CD4-positive, alpha-beta T cell (primary cell): ENCODE measurements at regions of chr18 and their contacts with region 1.

Region 1: GRCh38 chr18:59070181-59070912 is 69.3 kb upstream of the SEC11C start:
- DNase-seq: peak; percentile 64 to 82 (median 74)
- ATAC-seq: peak; percentile 76
- H3K4me3 ChIP-seq: no peak overlapping the region
- H3K4me3 Mint-ChIP-seq: no peak overlapping the region
- H3K27ac ChIP-seq: no peak overlapping the region
- H3K27ac Mint-ChIP-seq: no peak overlapping the region
- H3K4me1 ChIP-seq: peaks cover 3% of the 10 kb centered on the region
- H3K4me1 Mint-ChIP-seq: no peaks in the 10 kb centered on the region
- H3K27me3 ChIP-seq: peaks cover 0 to 4% of the 10 kb centered on the region in 2 experiments
- H3K27me3 Mint-ChIP-seq: no peaks in the 10 kb centered on the region
- CTCF ChIP-seq: peak; percentile 84

Region 2: GRCh38 chr18:57910817-57911216 is 1159.5 kb before region 1 on chr18:
- CTCF ChIA-PET with region 1: no interaction called
- POLR2A ChIA-PET with region 1: no interaction called
- intact Hi-C with region 1: no loop called
- DNase-seq: no peak
- ATAC-seq: no peak
- H3K4me3 ChIP-seq: no peak overlapping the region
- H3K4me3 Mint-ChIP-seq: no peak overlapping the region
- H3K27ac ChIP-seq: no peak overlapping the region
- H3K27ac Mint-ChIP-seq: no peak overlapping the region
- H3K4me1 ChIP-seq: no peaks in the 10 kb centered on the region
- H3K4me1 Mint-ChIP-seq: peaks cover 2% of the 10 kb centered on the region
- H3K27me3 ChIP-seq: no peaks in the 10 kb centered on the region
- H3K27me3 Mint-ChIP-seq: peaks cover 13% of the 10 kb centered on the region
- CTCF ChIP-seq: no peak

Region 3: GRCh38 chr18:58303363-58303762 is 767.0 kb before region 1 on chr18:
- CTCF ChIA-PET with region 1: no interaction called
- POLR2A ChIA-PET with region 1: no interaction called
- intact Hi-C with region 1: loop called in 1 of 2 experiments (anchors 5 kb)
- DNase-seq: peak in 5 of 14 experiments; percentile 16 to 71 (median 52)
- ATAC-seq: peak; percentile 89
- H3K4me3 ChIP-seq: no peak overlapping the region
- H3K4me3 Mint-ChIP-seq: peak overlapping the region; percentile 37
- H3K27ac ChIP-seq: peak overlapping the region in 1 of 2 donors; percentile 18
- H3K27ac Mint-ChIP-seq: peak overlapping the region; percentile 64
- H3K4me1 ChIP-seq: peaks cover 18% of the 10 kb centered on the region
- H3K4me1 Mint-ChIP-seq: peaks cover 30% of the 10 kb centered on the region
- H3K27me3 ChIP-seq: no peaks in the 10 kb centered on the region
- H3K27me3 Mint-ChIP-seq: no peaks in the 10 kb centered on the region
- CTCF ChIP-seq: no peak

Region 4: DNA sequence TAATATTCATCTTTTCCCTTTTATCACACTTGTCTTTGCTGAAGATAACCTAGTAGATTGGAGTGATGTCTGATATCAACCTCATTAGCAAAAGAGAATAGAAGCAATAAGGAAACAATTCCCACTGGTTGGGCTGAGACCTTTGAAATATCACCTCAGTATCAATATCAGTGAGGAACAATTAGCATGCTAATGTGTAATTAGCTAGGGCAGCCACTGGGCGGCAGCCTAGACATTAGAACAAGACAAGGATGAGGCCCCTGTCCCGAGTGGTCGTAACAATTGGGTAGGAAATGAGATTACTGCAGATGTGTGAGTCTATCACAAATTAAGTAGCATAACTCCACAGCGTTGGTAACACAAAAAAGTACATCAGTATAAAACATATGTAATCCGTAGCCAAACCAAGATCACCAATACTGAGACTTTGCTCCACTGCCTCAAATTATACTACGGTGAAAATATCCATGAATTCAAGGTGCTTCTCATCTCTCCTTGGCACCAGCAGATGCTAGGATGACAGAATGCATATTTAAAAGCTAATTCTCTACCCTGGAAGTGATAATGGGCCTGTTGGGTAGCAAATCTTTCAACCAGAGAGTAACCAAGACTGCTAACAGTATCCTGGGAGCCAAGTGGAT is 540.5 kb before region 1 on chr18:
- CTCF ChIA-PET with region 1: no interaction called
- POLR2A ChIA-PET with region 1: no interaction called
- intact Hi-C with region 1: loop called (anchors 5 to 10 kb)
- DNase-seq: peak; percentile 48 to 78 (median 66)
- ATAC-seq: peak; percentile 88
- H3K4me3 ChIP-seq: no peak overlapping the region
- H3K4me3 Mint-ChIP-seq: no peak overlapping the region
- H3K27ac ChIP-seq: no peak overlapping the region
- H3K27ac Mint-ChIP-seq: no peak overlapping the region
- H3K4me1 ChIP-seq: peaks cover 4% of the 10 kb centered on the region
- H3K4me1 Mint-ChIP-seq: peaks cover 5% of the 10 kb centered on the region
- H3K27me3 ChIP-seq: no peaks in the 10 kb centered on the region
- H3K27me3 Mint-ChIP-seq: no peaks in the 10 kb centered on the region
- CTCF ChIP-seq: peak; percentile 96

Region 5: DNA sequence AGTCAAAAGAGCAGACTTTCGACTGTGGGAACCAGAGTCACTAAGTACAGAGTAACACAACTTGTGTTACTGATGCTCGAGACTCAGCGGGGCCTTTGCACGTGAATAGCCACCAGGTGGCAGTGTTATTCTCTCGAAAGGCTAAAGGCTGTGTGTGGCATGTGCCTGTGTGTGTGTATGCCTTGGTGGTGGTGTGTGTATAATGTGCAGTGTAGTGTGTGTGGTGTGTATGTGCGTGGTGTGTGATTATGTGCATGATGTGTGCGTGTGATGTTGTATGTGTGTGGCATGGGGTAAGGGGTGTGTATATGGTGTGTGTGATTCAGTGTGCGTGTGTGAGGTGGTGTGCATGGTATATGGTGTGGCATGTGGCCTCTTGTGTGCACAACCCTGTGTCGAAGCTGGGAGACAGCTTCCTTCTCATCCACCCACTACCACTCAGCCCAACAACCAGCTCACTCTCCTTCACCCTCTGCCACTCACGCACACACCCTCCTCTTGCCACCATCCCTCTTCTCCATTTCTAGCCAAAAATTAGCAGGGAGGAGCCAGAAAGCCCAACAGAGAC is 288.6 kb before region 1 on chr18:
- CTCF ChIA-PET with region 1: interaction called, 8 read pairs
- POLR2A ChIA-PET with region 1: no interaction called
- intact Hi-C with region 1: loop called (anchors 1 kb)
- DNase-seq: peak; percentile 45 to 81 (median 56)
- ATAC-seq: peak; percentile 78
- H3K4me3 ChIP-seq: no peak overlapping the region
- H3K4me3 Mint-ChIP-seq: no peak overlapping the region
- H3K27ac ChIP-seq: no peak overlapping the region
- H3K27ac Mint-ChIP-seq: no peak overlapping the region
- H3K4me1 ChIP-seq: no peaks in the 10 kb centered on the region
- H3K4me1 Mint-ChIP-seq: no peaks in the 10 kb centered on the region
- H3K27me3 ChIP-seq: peaks cover 9 to 12% of the 10 kb centered on the region in 2 experiments
- H3K27me3 Mint-ChIP-seq: peaks cover 45% of the 10 kb centered on the region
- CTCF ChIP-seq: peak; percentile 90

Region 6: DNA sequence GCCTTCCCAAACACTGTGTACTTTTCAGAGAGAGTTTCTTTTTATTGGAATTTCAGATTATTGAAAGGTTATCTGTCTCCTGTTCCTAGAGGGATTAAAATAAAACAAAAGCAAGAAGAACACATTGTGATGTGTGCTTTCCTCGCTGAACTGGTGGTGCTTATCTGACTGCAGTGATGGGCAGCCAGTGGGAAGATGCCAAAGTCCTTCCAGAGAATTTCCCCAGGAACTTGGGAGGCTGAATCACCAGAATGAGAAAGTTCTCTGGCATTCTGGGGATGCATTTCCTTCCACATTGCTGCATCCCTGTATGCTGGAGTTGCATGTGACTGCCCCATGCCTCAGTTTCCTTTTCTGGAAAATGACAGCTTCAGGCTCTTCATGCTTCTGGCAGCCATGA is 15.4 kb after region 1 on chr18:
- CTCF ChIA-PET with region 1: interaction called, 12 read pairs
- POLR2A ChIA-PET with region 1: no interaction called
- intact Hi-C with region 1: no loop called
- DNase-seq: no peak
- ATAC-seq: no peak
- H3K4me3 ChIP-seq: no peak overlapping the region
- H3K4me3 Mint-ChIP-seq: no peak overlapping the region
- H3K27ac ChIP-seq: no peak overlapping the region
- H3K27ac Mint-ChIP-seq: no peak overlapping the region
- H3K4me1 ChIP-seq: peaks cover 8% of the 10 kb centered on the region
- H3K4me1 Mint-ChIP-seq: peaks cover 18% of the 10 kb centered on the region
- H3K27me3 ChIP-seq: peaks cover 3 to 8% of the 10 kb centered on the region in 2 experiments
- H3K27me3 Mint-ChIP-seq: peaks cover 18% of the 10 kb centered on the region
- CTCF ChIP-seq: no peak

Region 7: DNA sequence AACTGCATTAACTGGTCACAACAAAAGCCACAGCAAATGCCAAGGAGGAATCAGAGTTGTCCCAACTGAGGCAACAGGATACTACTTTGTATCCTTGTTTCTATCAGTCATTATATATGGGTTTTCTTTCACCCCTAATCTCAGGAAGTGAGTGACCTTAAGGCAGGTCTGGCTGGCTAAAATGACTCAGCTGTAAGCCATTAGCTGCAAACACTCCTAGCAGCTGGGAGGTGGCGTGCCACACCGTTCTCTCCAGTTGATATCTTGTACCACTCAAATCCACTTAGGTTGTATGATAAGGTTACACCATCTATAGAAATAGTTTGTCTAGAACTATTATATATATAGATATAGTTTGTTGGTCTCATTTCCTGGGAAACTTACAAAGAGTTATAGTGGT is 1473.3 kb after region 1 on chr18:
- CTCF ChIA-PET with region 1: no interaction called
- POLR2A ChIA-PET with region 1: no interaction called
- intact Hi-C with region 1: no loop called
- DNase-seq: no peak
- ATAC-seq: no peak
- H3K4me3 ChIP-seq: no peak overlapping the region
- H3K4me3 Mint-ChIP-seq: no peak overlapping the region
- H3K27ac ChIP-seq: no peak overlapping the region
- H3K27ac Mint-ChIP-seq: no peak overlapping the region
- H3K4me1 ChIP-seq: no peaks in the 10 kb centered on the region
- H3K4me1 Mint-ChIP-seq: no peaks in the 10 kb centered on the region
- H3K27me3 ChIP-seq: no peaks in the 10 kb centered on the region
- H3K27me3 Mint-ChIP-seq: no peaks in the 10 kb centered on the region
- CTCF ChIP-seq: no peak